Activated B cell treated with CpG ODN at 0.5 μM for 24 hours (primary cell): ENCODE measurements at regions of chr15 and their contacts with region 1.

Region 1: GRCh38 chr15:74615508-74616365 is at the start of gene CLK3:
- DNase-seq: peak; percentile 99
- ATAC-seq: peak; percentile 83
- H3K4me3 Mint-ChIP-seq: peak within 1 kb of the TSS; percentile 89
- H3K27ac Mint-ChIP-seq: peak within 1 kb of the TSS; percentile 95
- H3K4me1 Mint-ChIP-seq: peaks cover 35% of the 10 kb centered on the region
- H3K27me3 Mint-ChIP-seq: no peaks in the 10 kb centered on the region
- CTCF ChIP-seq: no peak
- total RNA-seq, gene CLK3: 100 and 116 TPM in 2 replicates

Region 2: DNA sequence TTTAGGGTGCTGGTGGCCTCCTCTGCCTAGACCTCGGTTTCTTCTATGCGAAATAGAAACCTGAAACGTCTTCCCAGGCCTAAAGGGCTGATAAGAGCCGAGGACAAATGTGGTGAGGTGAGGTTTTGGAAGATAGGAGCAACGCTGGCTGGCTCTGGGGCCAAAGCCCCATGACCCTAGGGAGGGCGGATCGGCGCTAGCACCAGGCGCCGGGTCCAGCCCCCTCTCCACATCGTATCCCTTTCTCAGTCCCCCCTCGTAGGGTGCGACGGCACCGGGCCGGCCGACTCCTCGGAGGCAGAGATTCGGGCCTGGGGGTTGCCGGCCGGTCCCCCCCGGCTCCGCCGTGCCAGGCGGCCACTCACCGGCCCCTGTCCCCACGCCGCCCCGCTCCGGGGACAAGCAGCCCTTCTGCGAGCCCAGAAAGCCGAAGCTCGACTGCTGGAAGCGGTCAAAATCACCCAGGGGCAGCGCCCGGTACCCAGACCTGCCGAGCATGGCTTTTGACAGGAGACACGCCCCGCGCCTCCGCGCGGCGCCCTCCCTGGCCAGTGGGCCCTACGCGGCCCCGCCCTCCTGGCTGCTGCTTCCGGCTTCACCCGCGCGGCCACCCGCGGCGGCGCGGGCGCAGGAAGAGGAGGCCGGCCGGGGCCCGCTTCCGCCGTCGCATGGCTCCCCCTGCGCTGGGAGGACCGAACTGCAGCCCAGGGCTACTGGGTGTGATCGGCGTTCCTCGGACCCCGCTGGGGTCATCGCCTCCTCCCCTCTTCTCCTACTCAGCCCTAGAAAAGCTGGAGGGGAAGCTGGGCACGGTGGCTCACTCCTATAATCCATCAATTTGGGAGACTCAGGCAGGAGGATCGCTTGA is 623.8 kb before region 1 on chr15 and contains the start of gene STOML1:
- CTCF ChIA-PET with region 1: no interaction called
- POLR2A ChIA-PET with region 1: no interaction called
- intact Hi-C with region 1: loop called (anchors 1 kb)
- DNase-seq: peak; percentile 98
- ATAC-seq: peak; percentile 77
- H3K4me3 Mint-ChIP-seq: peak within 1 kb of the TSS; percentile 86
- H3K27ac Mint-ChIP-seq: peak within 1 kb of the TSS; percentile 69
- H3K4me1 Mint-ChIP-seq: peaks cover 66% of the 10 kb centered on the region
- H3K27me3 Mint-ChIP-seq: no peaks in the 10 kb centered on the region
- CTCF ChIP-seq: no peak
- total RNA-seq, gene STOML1: 8.9 and 10.6 TPM in 2 replicates

Region 3: DNA sequence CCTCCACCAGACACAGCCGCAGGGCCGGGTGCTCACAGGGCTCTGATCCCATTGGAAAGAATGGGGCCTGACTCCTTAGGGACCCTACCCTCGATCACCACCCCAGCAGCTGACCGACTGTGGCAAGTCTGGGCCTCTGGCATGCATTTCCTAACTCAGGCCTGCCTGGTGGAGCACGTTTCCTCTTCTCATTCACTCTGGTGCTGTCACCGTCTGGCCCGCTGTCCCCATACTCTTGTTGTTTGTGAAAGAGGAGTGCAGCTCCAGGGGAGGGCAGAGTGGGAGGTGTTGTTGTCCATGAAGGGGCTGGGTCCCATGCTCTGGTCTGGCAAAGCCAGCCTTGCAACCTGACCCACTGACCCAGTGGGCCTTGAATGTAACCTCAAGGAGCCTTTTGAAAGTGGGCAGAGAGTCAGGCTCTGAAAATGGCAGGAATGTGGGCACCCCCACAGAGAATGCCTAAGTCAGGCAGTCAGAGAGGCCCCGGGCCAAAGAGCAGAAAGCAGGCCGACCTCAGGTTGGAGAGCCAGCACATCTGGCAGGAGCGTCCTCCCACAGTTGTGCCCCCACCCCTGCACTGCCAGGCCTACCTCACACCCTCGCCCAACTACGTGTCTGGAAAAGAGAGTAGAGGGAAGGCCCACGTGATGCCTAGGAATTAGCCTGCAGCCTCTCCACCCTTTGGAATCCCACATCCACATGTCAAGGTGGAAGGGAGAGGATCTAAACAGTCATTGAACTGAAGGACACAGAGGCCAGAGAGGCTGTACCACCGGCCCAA is 192.9 kb before region 1 on chr15:
- CTCF ChIA-PET with region 1: no interaction called
- POLR2A ChIA-PET with region 1: no interaction called
- intact Hi-C with region 1: no loop called
- DNase-seq: no peak
- ATAC-seq: peak; percentile 32
- H3K4me3 Mint-ChIP-seq: peak overlapping the region; percentile 59
- H3K27ac Mint-ChIP-seq: peak overlapping the region; percentile 64
- H3K4me1 Mint-ChIP-seq: peaks cover 95% of the 10 kb centered on the region
- H3K27me3 Mint-ChIP-seq: no peaks in the 10 kb centered on the region
- CTCF ChIP-seq: no peak

Region 4: DNA sequence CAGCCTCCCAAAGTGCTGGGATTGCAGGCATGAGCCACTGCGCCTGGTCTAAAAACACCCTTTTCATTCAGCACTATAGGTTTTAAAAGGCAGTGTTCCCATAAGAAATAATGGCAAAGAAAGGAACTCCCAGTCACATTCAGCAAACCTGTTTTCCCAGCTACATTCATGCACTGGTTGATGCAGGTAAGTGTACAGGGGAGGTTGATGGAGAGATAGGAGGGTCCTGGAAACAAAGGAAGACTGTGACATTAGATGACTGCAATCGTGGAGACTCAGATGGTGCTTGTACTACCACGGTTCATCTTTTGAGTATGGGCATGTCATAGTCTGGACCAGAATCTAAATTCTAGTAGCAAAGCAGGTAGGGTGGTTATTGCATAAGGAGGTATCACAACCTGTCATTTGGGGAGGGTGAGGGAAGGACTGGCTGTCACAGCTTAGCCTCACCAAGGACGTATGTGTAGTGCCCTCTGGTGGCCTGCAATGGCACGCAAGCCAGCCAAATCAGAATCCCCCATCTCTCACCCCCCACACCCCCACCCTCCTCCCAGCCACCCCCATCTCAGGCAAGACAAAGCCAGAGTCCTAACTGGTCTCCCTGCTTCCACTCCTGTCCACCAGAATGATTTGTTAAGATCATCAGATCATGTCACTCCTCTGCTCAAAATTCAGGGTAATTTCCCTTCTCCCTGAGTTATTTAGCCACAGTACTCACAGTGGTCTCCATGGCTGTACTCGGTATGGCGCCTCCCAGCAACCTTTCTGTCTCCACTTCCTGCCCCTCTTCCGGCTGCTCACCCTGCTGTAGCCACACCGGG is 126.0 kb before region 1 on chr15:
- CTCF ChIA-PET with region 1: no interaction called
- POLR2A ChIA-PET with region 1: no interaction called
- intact Hi-C with region 1: no loop called
- DNase-seq: peak; percentile 60
- ATAC-seq: peak; percentile 96
- H3K4me3 Mint-ChIP-seq: peak overlapping the region; percentile 51
- H3K27ac Mint-ChIP-seq: peak overlapping the region; percentile 8
- H3K4me1 Mint-ChIP-seq: peaks cover 11% of the 10 kb centered on the region
- H3K27me3 Mint-ChIP-seq: no peaks in the 10 kb centered on the region
- CTCF ChIP-seq: peak; percentile 25

Region 5: DNA sequence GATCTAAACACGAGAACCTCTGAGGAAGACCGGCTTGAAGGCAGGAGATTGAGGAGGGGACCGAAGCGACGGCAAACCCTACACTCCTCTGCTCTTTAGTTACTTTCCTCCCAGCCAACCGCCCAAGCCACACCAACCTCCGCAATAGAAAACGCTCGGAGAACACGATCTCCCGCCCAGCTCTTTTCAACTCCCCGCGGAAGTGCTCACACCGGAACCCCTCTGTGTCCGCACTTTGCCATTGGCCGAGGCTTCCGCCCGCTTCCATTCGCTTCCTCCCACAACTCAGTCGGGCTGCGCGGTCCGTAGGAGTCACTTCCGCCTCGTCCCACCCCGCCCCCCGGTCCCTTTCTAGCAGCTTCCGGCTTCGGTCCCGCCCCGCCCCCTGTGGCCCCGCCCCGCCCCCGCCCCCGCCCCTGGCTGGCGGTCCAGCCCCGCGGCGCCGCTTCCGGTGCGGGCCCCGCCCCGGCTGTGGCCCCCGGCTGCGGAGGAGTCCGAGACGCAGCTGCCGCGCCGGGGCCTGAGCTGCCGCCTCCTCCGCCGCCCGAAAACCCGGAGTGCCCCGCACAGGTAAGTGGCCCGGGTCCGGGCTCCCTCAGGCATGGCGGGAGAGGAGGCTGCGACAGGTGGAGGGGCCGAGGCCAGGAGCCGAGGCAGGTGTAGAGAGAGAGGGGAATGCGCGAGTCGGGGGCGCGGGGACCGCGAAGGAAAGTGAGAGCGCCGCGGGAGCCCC is 74.8 kb before region 1 on chr15 and contains the start of gene ARID3B:
- CTCF ChIA-PET with region 1: interaction called, 4 read pairs
- POLR2A ChIA-PET with region 1: interaction called, 37 read pairs
- intact Hi-C with region 1: loop called (anchors 1 kb)
- DNase-seq: peak; percentile 79
- ATAC-seq: peak; percentile 86
- H3K4me3 Mint-ChIP-seq: peak within 1 kb of the TSS; percentile 98
- H3K27ac Mint-ChIP-seq: peak within 1 kb of the TSS; percentile 95
- H3K4me1 Mint-ChIP-seq: peaks cover 49% of the 10 kb centered on the region
- H3K27me3 Mint-ChIP-seq: no peaks in the 10 kb centered on the region
- CTCF ChIP-seq: no peak
- total RNA-seq, gene ARID3B: 24.8 and 26.9 TPM in 2 replicates

Region 6: DNA sequence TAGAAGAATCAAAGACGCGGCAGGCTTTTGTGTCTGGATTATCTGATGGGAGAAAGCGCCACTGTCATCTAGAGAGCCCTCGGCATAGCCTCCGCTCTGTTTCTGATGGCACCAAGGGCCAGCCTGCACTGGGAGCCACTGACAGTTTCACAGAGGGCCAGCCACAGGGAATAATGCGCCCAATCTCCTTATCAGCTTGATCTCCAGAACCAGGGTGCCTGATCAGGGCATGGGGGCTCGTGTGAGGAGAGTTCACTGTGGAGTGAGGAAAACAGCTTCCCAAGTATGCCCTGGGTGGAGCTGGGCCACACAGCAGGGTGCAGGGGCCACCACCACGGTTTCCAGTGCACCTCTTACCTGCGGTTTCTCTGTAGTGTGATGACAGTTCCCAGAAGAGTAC is 29.9 kb before region 1 on chr15:
- CTCF ChIA-PET with region 1: no interaction called
- POLR2A ChIA-PET with region 1: no interaction called
- intact Hi-C with region 1: no loop called
- DNase-seq: no peak
- ATAC-seq: no peak
- H3K4me3 Mint-ChIP-seq: no peak overlapping the region
- H3K27ac Mint-ChIP-seq: no peak overlapping the region
- H3K4me1 Mint-ChIP-seq: no peaks in the 10 kb centered on the region
- H3K27me3 Mint-ChIP-seq: no peaks in the 10 kb centered on the region
- CTCF ChIP-seq: no peak

Region 7: GRCh38 chr15:74598126-74598842 is 17.5 kb before region 1 on chr15:
- CTCF ChIA-PET with region 1: no interaction called
- POLR2A ChIA-PET with region 1: interaction called, 14 read pairs
- intact Hi-C with region 1: loop called (anchors 1 kb)
- DNase-seq: peak; percentile 80
- ATAC-seq: peak; percentile 99
- H3K4me3 Mint-ChIP-seq: peak overlapping the region; percentile 96
- H3K27ac Mint-ChIP-seq: peak overlapping the region; percentile 88
- H3K4me1 Mint-ChIP-seq: peaks cover 19% of the 10 kb centered on the region
- H3K27me3 Mint-ChIP-seq: no peaks in the 10 kb centered on the region
- CTCF ChIP-seq: no peak

Region 8: DNA sequence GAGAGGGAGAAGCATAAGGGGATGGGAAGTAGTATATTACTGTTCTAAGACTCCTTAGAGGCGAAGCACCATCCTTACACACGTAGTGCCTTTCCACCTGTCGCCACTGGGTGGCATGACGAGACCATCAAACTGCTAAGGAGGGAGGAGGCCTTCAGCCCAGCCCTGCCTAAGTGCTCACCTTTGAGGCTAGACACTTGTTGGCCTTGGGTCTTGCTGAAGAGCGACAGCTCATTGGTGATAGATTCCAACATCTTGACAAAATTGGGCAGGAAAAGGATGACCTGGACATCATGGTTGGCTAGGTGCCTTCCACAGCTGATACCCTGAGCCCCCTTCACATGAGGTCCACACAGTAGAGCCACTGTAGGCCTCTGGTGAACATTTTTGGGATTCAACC is 19.5 kb after region 1 on chr15:
- CTCF ChIA-PET with region 1: interaction called, 136 read pairs
- POLR2A ChIA-PET with region 1: interaction called, 19 read pairs
- intact Hi-C with region 1: loop called (anchors 2 kb)
- DNase-seq: peak; percentile 61
- ATAC-seq: peak; percentile 64
- H3K4me3 Mint-ChIP-seq: no peak overlapping the region
- H3K27ac Mint-ChIP-seq: no peak overlapping the region
- H3K4me1 Mint-ChIP-seq: peaks cover 18% of the 10 kb centered on the region
- H3K27me3 Mint-ChIP-seq: no peaks in the 10 kb centered on the region
- CTCF ChIP-seq: no peak